GM10248 (cell line): ENCODE measurements at regions of chr6 and their contacts with region 1.

Region 1: GRCh38 chr6:85460921-85461797 is 11.3 kb downstream of the NT5E start:
- DNase-seq: peak; percentile 51
- CTCF ChIP-seq: no peak

Region 2: DNA sequence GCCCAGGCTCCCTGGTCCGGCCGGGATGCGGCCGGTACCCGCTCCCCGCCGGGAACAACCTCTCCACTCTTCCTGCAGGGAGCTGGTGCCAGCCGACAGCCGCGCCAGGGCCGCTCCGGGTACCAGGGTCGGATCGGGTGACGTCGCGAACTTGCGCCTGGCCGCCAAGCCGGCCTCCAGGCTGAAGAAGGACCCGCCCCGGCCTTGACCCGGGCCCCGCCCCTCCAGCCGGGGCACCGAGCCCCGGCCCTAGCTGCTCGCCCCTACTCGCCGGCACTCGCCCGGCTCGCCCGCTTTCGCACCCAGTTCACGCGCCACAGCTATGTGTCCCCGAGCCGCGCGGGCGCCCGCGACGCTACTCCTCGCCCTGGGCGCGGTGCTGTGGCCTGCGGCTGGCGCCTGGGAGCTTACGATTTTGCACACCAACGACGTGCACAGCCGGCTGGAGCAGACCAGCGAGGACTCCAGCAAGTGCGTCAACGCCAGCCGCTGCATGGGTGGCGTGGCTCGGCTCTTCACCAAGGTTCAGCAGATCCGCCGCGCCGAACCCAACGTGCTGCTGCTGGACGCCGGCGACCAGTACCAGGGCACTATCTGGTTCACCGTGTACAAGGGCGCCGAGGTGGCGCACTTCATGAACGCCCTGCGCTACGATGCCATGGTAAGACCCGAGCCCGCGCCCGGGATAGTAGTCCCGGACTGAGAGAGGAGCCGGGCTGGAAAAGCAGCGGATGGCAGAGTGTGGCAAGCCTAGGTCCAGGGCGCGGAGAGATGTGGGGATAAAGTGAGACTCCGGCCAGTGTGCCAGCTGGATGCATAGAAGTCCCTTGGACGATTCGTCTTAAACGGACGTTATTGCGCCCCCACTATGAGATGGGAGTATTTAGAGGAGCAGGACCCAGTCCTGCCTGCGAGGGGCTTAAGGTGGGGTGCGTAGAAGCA is 11.1 kb before region 1 on chr6 and contains the start of gene NT5E:
- CTCF ChIA-PET with region 1: interaction called, 52 read pairs
- POLR2A ChIA-PET with region 1: interaction called, 3 read pairs
- DNase-seq: peak; percentile 87
- CTCF ChIP-seq: peak; percentile 30

Region 3: GRCh38 chr6:85476532-85476931 is 15.4 kb after region 1 on chr6:
- CTCF ChIA-PET with region 1: interaction called, 74 read pairs
- POLR2A ChIA-PET with region 1: no interaction called
- DNase-seq: no peak
- CTCF ChIP-seq: no peak